ENCODE measurements at regions of chr9 and their contacts with region 1.

Region 1: GRCh38 chr9:83027153-83027891 is 35.6 kb downstream of the RASEF start:
- DNase-seq: peak; percentile 84
- H3K4me3 Mint-ChIP-seq: no peak overlapping the region
- H3K27ac Mint-ChIP-seq: peak overlapping the region; percentile 83
- H3K4me1 Mint-ChIP-seq: peaks cover 45% of the 10 kb centered on the region
- H3K27me3 Mint-ChIP-seq: no peaks in the 10 kb centered on the region
- CTCF ChIP-seq: no peak

Region 2: GRCh38 chr9:81848472-81848871 is 1178.8 kb before region 1 on chr9:
- CTCF ChIA-PET with region 1: no interaction called
- POLR2A ChIA-PET with region 1: no interaction called
- intact Hi-C with region 1: loop called (anchors 5 kb)
- DNase-seq: peak; percentile 35
- H3K4me3 Mint-ChIP-seq: no peak overlapping the region
- H3K27ac Mint-ChIP-seq: no peak overlapping the region
- H3K4me1 Mint-ChIP-seq: no peaks in the 10 kb centered on the region
- H3K27me3 Mint-ChIP-seq: no peaks in the 10 kb centered on the region
- CTCF ChIP-seq: peak; percentile 26

Region 3: DNA sequence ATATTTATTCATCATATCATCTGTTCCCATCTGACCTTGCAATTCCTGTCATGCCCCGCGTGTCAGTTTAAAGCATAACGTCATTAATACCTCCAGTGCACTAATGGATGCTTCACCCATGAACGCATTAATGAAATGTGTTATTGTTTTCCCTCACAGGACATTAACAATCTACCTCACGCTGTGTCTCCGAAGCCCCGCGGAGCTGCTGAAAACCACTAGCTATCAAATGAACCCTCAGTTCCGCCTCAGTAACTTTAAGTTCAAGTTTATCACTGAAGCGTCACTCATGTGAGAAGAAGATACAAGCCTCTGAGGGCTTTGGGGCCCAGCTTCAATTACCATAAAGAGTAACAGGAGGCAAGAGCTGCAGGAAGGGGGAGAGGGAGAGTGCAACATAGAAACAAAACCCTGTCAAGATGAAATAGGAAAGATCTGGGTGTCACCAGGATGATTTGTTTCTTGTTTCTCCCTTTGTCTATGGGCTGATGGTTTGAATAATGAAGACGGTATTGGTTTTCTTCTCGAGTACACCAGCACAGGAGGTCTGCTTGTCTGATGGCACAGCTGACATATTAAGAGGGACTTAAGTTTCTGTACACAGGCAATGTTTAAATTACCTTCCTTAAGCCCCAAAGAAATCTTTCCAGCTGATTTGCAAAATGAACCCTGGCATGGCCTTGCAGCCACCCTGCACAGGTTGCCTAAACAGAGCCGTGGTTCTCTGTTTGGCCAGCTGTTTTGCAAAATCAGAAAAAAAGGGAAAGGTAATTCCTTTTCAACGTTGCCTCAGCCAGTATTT is 103.7 kb before region 1 on chr9:
- CTCF ChIA-PET with region 1: no interaction called
- POLR2A ChIA-PET with region 1: no interaction called
- intact Hi-C with region 1: no loop called
- DNase-seq: no peak
- H3K4me3 Mint-ChIP-seq: no peak overlapping the region
- H3K27ac Mint-ChIP-seq: no peak overlapping the region
- H3K4me1 Mint-ChIP-seq: no peaks in the 10 kb centered on the region
- H3K27me3 Mint-ChIP-seq: no peaks in the 10 kb centered on the region
- CTCF ChIP-seq: no peak

Region 4: GRCh38 chr9:83012922-83013838 is 14.1 kb before region 1 on chr9:
- CTCF ChIA-PET with region 1: no interaction called
- POLR2A ChIA-PET with region 1: interaction called, 11 read pairs
- intact Hi-C with region 1: no loop called
- DNase-seq: no peak
- H3K4me3 Mint-ChIP-seq: no peak overlapping the region
- H3K27ac Mint-ChIP-seq: peak overlapping the region; percentile 7
- H3K4me1 Mint-ChIP-seq: no peaks in the 10 kb centered on the region
- H3K27me3 Mint-ChIP-seq: no peaks in the 10 kb centered on the region
- CTCF ChIP-seq: no peak

Region 5: DNA sequence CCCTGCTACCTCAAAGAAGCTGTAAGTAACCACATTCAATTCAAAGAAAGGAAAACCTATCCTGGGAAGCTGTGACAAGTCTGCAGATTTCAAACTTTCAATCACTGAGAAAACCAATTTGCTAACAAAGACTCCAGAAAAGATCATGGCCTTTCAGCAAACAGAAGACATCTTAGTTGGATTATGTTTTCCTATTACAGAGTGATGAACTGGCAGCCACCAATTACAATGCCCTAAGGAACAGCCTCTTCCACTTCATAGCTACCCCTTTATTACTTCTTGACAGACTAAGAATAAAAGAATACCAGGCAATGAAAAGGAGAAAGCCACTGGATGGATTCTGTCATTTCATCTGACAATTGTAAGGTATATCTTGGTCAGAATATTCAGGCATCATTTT is 163.8 kb after region 1 on chr9:
- CTCF ChIA-PET with region 1: no interaction called
- POLR2A ChIA-PET with region 1: no interaction called
- intact Hi-C with region 1: no loop called
- DNase-seq: no peak
- H3K4me3 Mint-ChIP-seq: no peak overlapping the region
- H3K27ac Mint-ChIP-seq: no peak overlapping the region
- H3K4me1 Mint-ChIP-seq: peaks cover 7% of the 10 kb centered on the region
- H3K27me3 Mint-ChIP-seq: no peaks in the 10 kb centered on the region
- CTCF ChIP-seq: no peak

Measured in MCF 10A (cell line).